ENCODE measurements at regions of chr16 and their contacts with region 1.

Region 1: DNA sequence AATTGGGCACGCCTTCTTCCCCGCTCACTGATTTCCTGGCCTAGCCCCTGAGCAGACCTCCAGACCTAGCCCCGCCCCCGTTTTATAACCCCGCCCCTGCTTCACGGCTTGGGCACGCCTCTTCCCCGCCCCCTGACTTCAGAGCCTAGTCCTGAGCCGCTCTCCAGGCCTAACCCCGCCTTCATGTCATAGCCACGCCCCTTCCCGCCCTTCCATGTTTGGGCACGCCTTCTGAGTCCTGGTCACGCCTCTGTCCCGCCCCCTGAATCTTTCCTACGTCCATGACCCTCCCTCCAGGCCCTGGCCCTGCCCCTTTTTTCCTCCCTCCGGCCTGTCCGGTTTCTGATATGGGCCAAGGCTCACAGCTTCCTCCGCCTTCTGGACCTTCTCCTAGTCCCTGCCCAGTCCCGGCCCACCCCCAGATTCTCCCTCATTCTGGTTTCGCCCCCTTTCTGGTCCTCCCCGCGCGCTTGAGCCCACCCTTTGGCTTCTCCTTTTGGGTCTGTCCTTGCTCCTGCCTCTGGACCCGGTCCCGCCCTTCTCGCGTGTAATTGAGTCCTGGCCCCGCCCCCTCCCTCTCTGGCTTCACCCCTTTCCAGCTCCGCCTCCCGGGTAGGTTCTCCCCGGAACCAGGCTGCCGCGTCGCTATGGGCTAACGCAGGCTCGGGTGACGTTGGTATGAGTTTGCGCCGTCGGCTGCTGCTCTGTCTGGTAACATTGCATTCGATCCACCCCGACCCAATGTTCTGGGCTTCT is 15.1 kb upstream of the EEF2K start:
- DNase-seq: peak; percentile 99
- ATAC-seq: peak; percentile 66
- H3K4me3 Mint-ChIP-seq: peak overlapping the region; percentile 86
- H3K27ac Mint-ChIP-seq: peak overlapping the region; percentile 99
- H3K4me1 Mint-ChIP-seq: peaks cover 57% of the 10 kb centered on the region
- H3K27me3 Mint-ChIP-seq: no peaks in the 10 kb centered on the region

Region 2: GRCh38 chr16:21300309-21301167 is 890.4 kb before region 1 on chr16:
- CTCF ChIA-PET with region 1: no interaction called
- POLR2A ChIA-PET with region 1: no interaction called
- intact Hi-C with region 1: loop called in 1 of 2 experiments (anchors 5 kb)
- DNase-seq: peak; percentile 81
- ATAC-seq: peak; percentile 77
- H3K4me3 Mint-ChIP-seq: peak overlapping the region; percentile 85
- H3K27ac Mint-ChIP-seq: peak overlapping the region; percentile 81
- H3K4me1 Mint-ChIP-seq: peaks cover 25% of the 10 kb centered on the region
- H3K27me3 Mint-ChIP-seq: peaks cover 22% of the 10 kb centered on the region

Region 3: DNA sequence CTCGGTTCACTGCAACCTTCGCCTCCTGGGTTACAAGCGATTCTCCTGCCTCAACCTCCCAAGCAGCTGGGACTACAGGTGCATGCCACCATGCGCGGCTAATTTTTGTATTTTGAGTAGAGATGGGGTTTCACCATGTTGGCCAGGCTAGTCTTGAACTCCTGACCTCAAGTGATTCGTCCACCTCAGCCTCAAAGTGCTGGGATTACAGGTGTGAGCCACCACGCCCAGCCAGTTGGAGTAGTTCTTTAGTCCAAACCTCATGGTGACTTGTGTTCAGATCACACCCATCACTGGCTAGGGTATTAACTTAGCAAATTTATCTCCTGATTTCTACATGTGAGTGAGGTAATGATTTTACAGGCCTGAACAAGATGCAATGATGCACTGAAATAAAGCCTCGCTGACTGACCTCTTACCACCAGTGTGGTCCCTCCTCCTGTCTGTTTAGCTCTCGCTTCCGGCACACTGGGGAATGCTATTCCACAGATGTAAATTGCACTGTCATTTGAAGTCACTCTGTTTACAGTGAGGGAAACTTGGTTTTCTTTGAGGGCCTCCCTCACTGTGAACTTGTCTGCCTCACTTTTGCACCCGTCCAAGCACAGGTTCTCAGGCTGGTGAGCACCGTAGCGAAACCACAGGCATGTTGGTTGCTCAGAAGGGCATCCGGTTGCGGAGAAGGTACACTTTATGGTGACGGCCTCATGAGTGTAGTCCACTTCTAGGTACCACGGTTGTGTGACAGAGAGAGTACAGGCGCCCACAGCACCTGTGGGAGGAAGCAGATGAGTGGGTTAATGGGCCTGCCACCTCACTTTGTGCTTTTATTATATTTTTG is 544.0 kb before region 1 on chr16:
- CTCF ChIA-PET with region 1: interaction called, 3 read pairs
- POLR2A ChIA-PET with region 1: no interaction called
- intact Hi-C with region 1: loop called in 1 of 2 experiments (anchors 5 kb)
- DNase-seq: peak; percentile 89
- ATAC-seq: peak; percentile 89
- H3K4me3 Mint-ChIP-seq: peak overlapping the region; percentile 54
- H3K27ac Mint-ChIP-seq: peak overlapping the region; percentile 92
- H3K4me1 Mint-ChIP-seq: peaks cover 61% of the 10 kb centered on the region
- H3K27me3 Mint-ChIP-seq: no peaks in the 10 kb centered on the region

Region 4: GRCh38 chr16:22001591-22001990 is 189.4 kb before region 1 on chr16:
- CTCF ChIA-PET with region 1: interaction called, 64 read pairs
- POLR2A ChIA-PET with region 1: no interaction called
- intact Hi-C with region 1: loop called (anchors 1 kb)
- DNase-seq: no peak
- ATAC-seq: no peak
- H3K4me3 Mint-ChIP-seq: no peak overlapping the region
- H3K27ac Mint-ChIP-seq: no peak overlapping the region
- H3K4me1 Mint-ChIP-seq: peaks cover 7% of the 10 kb centered on the region
- H3K27me3 Mint-ChIP-seq: no peaks in the 10 kb centered on the region

Region 5: DNA sequence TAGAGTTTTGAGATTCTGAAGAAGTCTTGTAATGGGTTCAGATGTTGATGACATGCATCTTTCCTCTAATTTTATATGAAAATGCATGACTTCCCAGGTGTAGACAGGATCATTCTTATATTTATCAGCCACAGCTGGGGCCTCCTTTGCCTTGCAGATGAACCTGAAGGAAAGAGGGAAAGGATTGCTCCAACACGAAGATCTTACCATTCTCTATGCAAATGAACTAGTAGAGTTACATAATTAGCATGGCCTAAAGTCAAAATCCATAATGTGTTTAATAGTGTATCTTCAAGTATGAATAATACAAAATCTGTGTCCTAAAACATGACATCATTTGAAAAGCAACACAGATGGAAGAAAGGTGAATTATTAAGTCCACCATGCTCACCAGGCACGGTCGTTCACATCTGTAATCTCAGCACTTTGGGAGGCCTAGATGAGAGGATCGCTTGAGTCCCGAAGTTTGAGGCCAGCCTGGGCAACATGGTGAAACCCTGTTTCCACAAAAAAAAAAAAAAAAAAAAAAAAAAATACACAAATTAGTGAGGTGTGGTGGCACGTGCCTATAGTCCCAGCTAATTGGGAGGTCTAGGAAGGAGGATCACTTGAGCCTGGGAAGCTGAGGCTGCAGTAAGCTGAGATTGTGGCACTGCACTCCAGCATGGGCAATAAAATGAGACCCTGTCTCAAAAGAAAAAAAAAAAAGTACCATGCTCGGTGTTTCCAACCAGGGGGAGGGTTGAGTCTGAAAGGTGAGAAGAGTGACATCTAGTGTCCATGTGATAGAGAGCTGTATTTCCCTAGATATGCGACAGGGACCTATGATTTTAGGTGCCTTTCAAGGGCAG is 92.3 kb before region 1 on chr16:
- CTCF ChIA-PET with region 1: interaction called, 27 read pairs
- POLR2A ChIA-PET with region 1: interaction called, 5 read pairs
- intact Hi-C with region 1: loop called (anchors 1 to 2 kb)
- DNase-seq: peak; percentile 13
- ATAC-seq: peak; percentile 87
- H3K4me3 Mint-ChIP-seq: no peak overlapping the region
- H3K27ac Mint-ChIP-seq: no peak overlapping the region
- H3K4me1 Mint-ChIP-seq: no peaks in the 10 kb centered on the region
- H3K27me3 Mint-ChIP-seq: peaks cover 6% of the 10 kb centered on the region

Region 6: GRCh38 chr16:22347100-22347820 is 156.3 kb after region 1 on chr16:
- CTCF ChIA-PET with region 1: interaction called, 3 read pairs
- POLR2A ChIA-PET with region 1: interaction called, 11 read pairs
- intact Hi-C with region 1: no loop called
- DNase-seq: no peak
- ATAC-seq: no peak
- H3K4me3 Mint-ChIP-seq: no peak overlapping the region
- H3K27ac Mint-ChIP-seq: peak overlapping the region; percentile 52
- H3K4me1 Mint-ChIP-seq: peaks cover 28% of the 10 kb centered on the region
- H3K27me3 Mint-ChIP-seq: no peaks in the 10 kb centered on the region